Naive thymus-derived CD4-positive, alpha-beta T cell (primary cell): ENCODE measurements at regions of chr5 and their contacts with region 1.

Region 1: DNA sequence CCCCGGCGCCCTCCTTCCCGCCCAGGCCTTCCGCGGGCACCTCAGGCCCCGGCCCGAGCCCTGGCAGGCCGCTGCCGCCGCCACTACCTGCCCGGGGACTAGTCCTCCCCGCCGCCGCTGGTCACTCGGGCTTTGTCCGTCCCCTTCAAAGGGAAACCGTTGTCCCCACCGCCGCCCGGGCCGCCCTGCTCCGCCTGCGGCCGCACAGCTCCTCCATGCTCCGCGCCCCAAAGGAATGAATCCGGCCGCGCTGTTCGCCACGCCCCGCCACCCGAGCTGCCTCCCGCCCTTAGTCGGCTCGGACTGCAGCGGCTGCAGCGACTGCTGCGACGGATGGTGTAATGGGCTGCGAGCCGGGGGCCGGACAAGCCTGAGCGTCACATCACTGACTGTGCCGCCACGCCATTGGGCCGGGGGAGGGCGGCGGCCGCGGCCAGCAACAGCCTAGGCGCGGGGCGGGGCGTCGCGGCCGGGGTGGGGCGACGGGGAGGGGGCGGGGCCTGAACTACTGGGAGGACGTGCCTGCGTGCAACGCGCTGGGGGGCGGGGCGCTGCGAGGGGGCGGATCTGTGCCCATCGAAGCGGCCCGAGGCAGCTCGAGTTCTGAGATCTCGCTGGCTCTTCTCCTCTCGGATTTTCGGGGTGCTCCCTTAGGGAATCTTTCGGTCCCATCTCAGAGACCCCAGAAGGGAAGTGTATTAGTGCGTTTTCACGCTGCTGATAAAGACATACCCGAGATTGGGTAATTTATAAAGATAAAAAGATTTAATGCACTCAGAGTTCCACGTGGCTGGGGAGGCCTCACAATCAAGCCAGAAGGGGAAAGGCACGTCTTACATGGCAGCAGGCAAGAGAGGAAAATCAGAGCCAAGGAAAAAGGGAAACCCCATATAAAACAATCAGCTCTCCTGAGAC is at the start of gene FEM1C:
- DNase-seq: peak; percentile 85 to 97 (median 93)
- ATAC-seq: peak; percentile 93
- H3K4me3 ChIP-seq: peak within 1 kb of the TSS; percentile 70
- H3K4me3 Mint-ChIP-seq: peak within 1 kb of the TSS; percentile 94 to 100 (median 96)
- H3K27ac ChIP-seq: peak within 1 kb of the TSS; percentile 96
- H3K27ac Mint-ChIP-seq: peak within 1 kb of the TSS; percentile 92 to 100 (median 96)
- H3K4me1 ChIP-seq: peaks cover 31 to 38% of the 10 kb centered on the region in 2 donors
- H3K4me1 Mint-ChIP-seq: peaks cover 36 to 49% (median 43%) of the 10 kb centered on the region in 7 donors
- H3K27me3 ChIP-seq: no peaks in the 10 kb centered on the region
- H3K27me3 Mint-ChIP-seq: no peaks in the 10 kb centered on the region
- total RNA-seq, gene FEM1C: 14.9 to 33.1 (median 18.5) TPM

Region 2: DNA sequence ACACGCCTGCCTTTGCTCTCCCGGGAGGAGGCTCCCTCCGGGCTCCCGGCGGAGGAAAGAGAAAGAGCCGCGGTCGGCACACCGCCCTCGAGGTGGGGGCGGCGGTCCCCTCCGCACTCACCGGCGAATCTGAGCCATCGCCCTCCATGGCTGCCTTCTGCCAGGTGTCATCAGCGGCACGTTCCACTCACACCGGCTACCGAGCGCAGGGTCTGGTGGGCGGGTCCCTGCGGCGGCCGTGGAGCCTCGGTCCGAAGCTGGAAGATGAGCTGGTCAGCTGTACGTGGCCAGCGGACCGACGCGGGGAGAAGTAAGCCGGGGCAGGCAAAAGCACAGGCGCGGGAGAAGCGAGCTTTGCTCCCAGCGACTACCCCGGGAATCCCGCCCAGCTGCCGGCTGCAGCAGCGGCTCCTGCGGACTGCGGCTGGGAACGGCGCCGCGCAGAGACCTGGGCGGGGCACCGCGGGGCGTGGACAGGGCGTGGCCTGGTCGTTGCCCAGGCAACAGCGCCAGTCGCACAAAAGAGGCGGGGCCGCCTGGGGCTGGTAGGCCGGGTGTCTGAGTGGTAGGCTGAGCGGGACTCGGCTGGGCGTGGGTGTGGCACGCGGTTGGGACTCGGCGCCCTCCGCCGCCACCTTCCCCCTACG is 375.1 kb before region 1 on chr5 and contains the start of gene TRIM36:
- CTCF ChIA-PET with region 1: no interaction called
- POLR2A ChIA-PET with region 1: interaction called, 4 read pairs
- intact Hi-C with region 1: loop called (anchors 1 to 2 kb)
- DNase-seq: peak; percentile 70 to 97 (median 81)
- ATAC-seq: peak; percentile 98
- H3K4me3 ChIP-seq: peak within 1 kb of the TSS; percentile 70
- H3K4me3 Mint-ChIP-seq: peak within 1 kb of the TSS; percentile 71 to 89 (median 84)
- H3K27ac ChIP-seq: no peak within 1 kb of the TSS
- H3K27ac Mint-ChIP-seq: peak within 1 kb of the TSS in 2 of 9 donors; percentile 53 to 81
- H3K4me1 ChIP-seq: peaks cover 9 to 11% of the 10 kb centered on the region in 2 donors
- H3K4me1 Mint-ChIP-seq: peaks cover 6 to 17% (median 12%) of the 10 kb centered on the region in 7 donors
- H3K27me3 ChIP-seq: peaks cover 17 to 38% of the 10 kb centered on the region in 2 donors
- H3K27me3 Mint-ChIP-seq: peaks cover 61 to 77% (median 68%) of the 10 kb centered on the region in 5 donors
- total RNA-seq, gene TRIM36: 0.12 to 2.6 (median 0.32) TPM in 4 of 5 experiments, not detected in the other

Region 3: GRCh38 chr5:115262321-115263077 is 282.2 kb before region 1 on chr5 and contains the start of gene PGGT1B:
- CTCF ChIA-PET with region 1: no interaction called
- POLR2A ChIA-PET with region 1: interaction called, 5 read pairs
- intact Hi-C with region 1: loop called (anchors 1 kb)
- DNase-seq: peak; percentile 45 to 69 (median 64)
- ATAC-seq: peak; percentile 94
- H3K4me3 ChIP-seq: peak within 1 kb of the TSS; percentile 94
- H3K4me3 Mint-ChIP-seq: peak within 1 kb of the TSS; percentile 91 to 100 (median 96)
- H3K27ac ChIP-seq: peak within 1 kb of the TSS; percentile 76
- H3K27ac Mint-ChIP-seq: peak within 1 kb of the TSS; percentile 83 to 96 (median 94)
- H3K4me1 ChIP-seq: peaks cover 15 to 23% of the 10 kb centered on the region in 2 donors
- H3K4me1 Mint-ChIP-seq: peaks cover 33 to 59% (median 43%) of the 10 kb centered on the region in 7 donors
- H3K27me3 ChIP-seq: no peaks in the 10 kb centered on the region
- H3K27me3 Mint-ChIP-seq: peaks cover 0 to 4% (median 0%) of the 10 kb centered on the region in 5 donors
- total RNA-seq, gene PGGT1B: 34.5 to 49.1 (median 41.5) TPM

Region 4: GRCh38 chr5:115524199-115524847 is 20.4 kb before region 1 on chr5:
- CTCF ChIA-PET with region 1: no interaction called
- POLR2A ChIA-PET with region 1: interaction called, 7 read pairs
- intact Hi-C with region 1: loop called (anchors 2 kb)
- DNase-seq: no peak
- ATAC-seq: no peak
- H3K4me3 ChIP-seq: no peak overlapping the region
- H3K4me3 Mint-ChIP-seq: no peak overlapping the region
- H3K27ac ChIP-seq: no peak overlapping the region
- H3K27ac Mint-ChIP-seq: peak overlapping the region in 3 of 9 donors; percentile 3 to 48 (median 16)
- H3K4me1 ChIP-seq: peaks cover 11 to 13% of the 10 kb centered on the region in 2 donors
- H3K4me1 Mint-ChIP-seq: peaks cover 32 to 65% (median 53%) of the 10 kb centered on the region in 7 donors
- H3K27me3 ChIP-seq: no peaks in the 10 kb centered on the region
- H3K27me3 Mint-ChIP-seq: no peaks in the 10 kb centered on the region

Region 5: DNA sequence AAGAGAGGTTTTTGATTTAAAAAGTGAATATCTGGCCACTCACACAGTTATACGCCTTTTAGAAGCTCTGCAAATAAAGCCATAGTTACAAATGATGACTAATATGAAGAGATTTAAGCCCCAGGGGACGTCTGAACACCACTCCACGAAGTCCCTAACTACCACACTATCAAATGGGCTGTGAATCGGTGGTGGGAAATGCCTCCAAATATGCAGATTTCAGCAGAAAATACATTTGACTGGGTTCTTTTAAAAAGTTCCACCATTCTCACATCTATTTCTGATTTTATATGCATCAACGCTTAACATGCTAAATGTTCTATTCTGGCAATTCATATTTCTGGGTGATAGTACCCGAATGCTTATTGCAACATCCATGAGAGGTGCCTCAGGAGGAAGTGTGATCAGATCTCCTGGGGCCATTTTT is 35.1 kb after region 1 on chr5:
- CTCF ChIA-PET with region 1: no interaction called
- POLR2A ChIA-PET with region 1: no interaction called
- intact Hi-C with region 1: loop called in 1 of 2 experiments (anchors 1 kb)
- DNase-seq: no peak
- ATAC-seq: no peak
- H3K4me3 ChIP-seq: no peak overlapping the region
- H3K4me3 Mint-ChIP-seq: no peak overlapping the region
- H3K27ac ChIP-seq: no peak overlapping the region
- H3K27ac Mint-ChIP-seq: no peak overlapping the region
- H3K4me1 ChIP-seq: no peaks in the 10 kb centered on the region
- H3K4me1 Mint-ChIP-seq: no peaks in the 10 kb centered on the region
- H3K27me3 ChIP-seq: no peaks in the 10 kb centered on the region
- H3K27me3 Mint-ChIP-seq: peaks cover 0 to 4% (median 0%) of the 10 kb centered on the region in 5 donors

Region 6: DNA sequence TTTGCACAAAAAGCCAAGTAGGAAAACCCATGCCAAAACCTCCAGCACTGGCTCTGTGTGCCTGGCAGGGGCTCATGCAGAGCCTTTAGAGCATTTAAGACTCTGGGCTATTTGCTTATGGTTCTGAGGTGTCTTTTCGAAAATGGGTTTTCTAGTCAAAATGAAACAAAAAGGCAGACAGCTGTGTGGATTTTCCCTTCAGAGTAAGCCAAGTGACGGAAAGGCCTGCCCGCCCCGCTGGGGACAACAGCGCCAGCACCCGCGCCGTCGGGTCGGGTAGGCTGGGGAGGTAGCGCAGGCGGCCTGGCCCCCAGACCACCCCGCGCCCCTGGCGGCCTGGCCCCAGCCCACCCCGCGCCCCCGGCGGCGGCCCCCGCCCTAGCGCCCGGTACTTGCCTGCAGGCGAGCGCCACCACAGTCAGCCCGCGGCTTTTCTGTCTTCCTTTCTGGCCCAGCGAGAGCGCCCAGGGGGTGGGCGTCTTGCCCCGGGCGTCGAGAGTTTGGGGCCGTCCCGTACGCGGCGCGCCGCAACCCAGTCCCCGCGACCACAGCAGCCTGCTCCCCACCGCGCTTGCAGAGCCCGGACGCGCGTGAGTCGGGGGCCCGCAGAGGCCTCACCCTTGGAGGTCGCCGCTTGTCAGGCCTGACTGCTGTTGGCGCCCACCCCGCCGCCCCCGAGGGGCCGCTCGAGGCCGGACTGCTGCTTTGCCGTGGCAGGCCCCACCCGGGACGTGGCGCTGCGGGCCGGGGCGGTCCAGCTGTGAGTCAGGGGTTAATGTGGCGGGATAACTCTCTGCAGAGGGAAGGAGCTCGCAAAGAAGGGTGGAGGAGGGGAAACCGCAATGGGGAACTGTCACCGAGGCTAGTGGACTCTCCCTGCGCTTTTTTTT is 57.3 kb after region 1 on chr5 and contains the start of gene TICAM2:
- CTCF ChIA-PET with region 1: no interaction called
- POLR2A ChIA-PET with region 1: interaction called, 8 read pairs
- intact Hi-C with region 1: loop called (anchors 1 kb)
- DNase-seq: peak; percentile 39 to 74 (median 56)
- ATAC-seq: peak; percentile 84
- H3K4me3 ChIP-seq: peak within 1 kb of the TSS; percentile 63
- H3K4me3 Mint-ChIP-seq: peak within 1 kb of the TSS; percentile 71 to 89 (median 84)
- H3K27ac ChIP-seq: peak within 1 kb of the TSS; percentile 72
- H3K27ac Mint-ChIP-seq: peak within 1 kb of the TSS; percentile 69 to 94 (median 84)
- H3K4me1 ChIP-seq: no peaks in the 10 kb centered on the region
- H3K4me1 Mint-ChIP-seq: peaks cover 19 to 41% (median 32%) of the 10 kb centered on the region in 7 donors
- H3K27me3 ChIP-seq: no peaks in the 10 kb centered on the region
- H3K27me3 Mint-ChIP-seq: no peaks in the 10 kb centered on the region
- total RNA-seq, gene TICAM2: 0.93 to 3.7 (median 1.9) TPM

Region 7: DNA sequence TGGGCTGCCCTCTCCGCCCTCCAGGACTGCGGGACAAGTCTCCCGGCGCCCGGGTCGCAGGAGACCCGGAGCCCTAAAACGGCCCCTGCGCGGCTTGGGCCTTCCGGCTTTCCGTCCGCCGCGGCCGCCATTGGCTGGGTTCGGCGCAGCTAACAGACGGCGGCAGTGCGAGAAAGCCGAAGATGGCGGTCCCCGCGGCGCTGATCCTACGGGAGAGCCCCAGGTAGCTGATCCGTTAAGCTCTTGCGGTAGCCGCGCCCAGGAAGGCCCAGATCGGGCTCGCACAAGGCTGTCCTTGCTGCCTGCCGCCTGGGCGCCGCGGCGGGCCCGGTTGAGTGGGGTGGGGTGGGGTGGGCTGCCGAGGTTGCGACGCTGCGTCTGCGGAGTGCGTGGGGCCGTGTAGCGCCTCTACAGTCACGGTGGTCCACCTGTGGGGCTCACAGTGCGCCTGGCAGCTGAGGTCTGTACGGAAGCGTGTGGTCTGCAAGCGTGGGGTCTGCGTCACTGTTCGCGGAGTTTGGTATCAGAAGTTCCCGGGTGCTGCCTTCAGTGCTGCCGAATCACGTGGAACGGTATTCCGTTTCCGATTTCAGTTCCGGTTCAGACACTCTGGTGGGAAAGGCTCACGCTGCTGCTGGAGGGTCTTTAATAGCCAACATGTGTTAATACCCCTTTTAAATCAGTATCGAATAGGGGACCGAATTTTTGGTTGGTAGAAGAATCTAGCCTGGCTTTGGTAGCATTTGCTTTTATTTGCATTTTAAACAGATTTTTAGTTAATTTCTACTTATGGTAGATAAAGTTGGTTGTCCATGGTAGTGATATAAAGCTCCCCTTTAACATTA is 540.4 kb after region 1 on chr5 and contains the start of gene COMMD10:
- CTCF ChIA-PET with region 1: no interaction called
- POLR2A ChIA-PET with region 1: interaction called, 3 read pairs
- intact Hi-C with region 1: loop called (anchors 1 kb)
- DNase-seq: peak; percentile 65 to 88 (median 83)
- ATAC-seq: peak; percentile 95
- H3K4me3 ChIP-seq: peak within 1 kb of the TSS; percentile 54
- H3K4me3 Mint-ChIP-seq: peak within 1 kb of the TSS; percentile 87 to 98 (median 95)
- H3K27ac ChIP-seq: peak within 1 kb of the TSS; percentile 94
- H3K27ac Mint-ChIP-seq: peak within 1 kb of the TSS; percentile 90 to 99 (median 98)
- H3K4me1 ChIP-seq: peaks cover 13 to 16% of the 10 kb centered on the region in 2 donors
- H3K4me1 Mint-ChIP-seq: peaks cover 22 to 77% (median 66%) of the 10 kb centered on the region in 7 donors
- H3K27me3 ChIP-seq: no peaks in the 10 kb centered on the region
- H3K27me3 Mint-ChIP-seq: peaks cover 0 to 3% (median 0%) of the 10 kb centered on the region in 5 donors
- total RNA-seq, gene COMMD10: 29.4 to 50.6 (median 37.8) TPM

Region 8: DNA sequence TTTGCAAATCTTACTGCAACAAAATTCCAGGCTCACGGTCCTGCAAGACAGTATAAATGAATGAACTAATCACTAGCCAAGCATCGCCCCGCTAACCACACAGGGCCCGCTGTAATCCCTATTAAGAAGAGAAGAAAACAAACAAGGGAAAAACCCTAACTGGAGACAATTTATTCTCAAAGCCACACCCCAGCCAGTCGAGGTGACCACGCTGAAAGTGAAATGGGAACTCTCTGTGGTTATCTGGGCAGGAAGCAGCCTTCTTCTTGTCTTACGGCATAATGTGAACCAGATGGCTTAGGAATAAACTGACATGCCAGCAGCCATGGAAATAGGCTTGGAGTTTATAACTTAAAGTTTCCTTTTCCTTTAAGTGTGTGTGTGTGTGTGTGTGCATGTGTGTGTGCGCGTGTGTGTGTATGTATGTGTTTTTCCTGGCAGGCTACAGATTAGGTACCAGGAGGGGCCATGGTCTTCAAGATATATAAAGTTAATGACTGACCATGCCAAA is 909.8 kb after region 1 on chr5:
- CTCF ChIA-PET with region 1: no interaction called
- POLR2A ChIA-PET with region 1: no interaction called
- intact Hi-C with region 1: no loop called
- DNase-seq: no peak
- ATAC-seq: peak; percentile 65
- H3K4me3 ChIP-seq: no peak overlapping the region
- H3K4me3 Mint-ChIP-seq: no peak overlapping the region
- H3K27ac ChIP-seq: no peak overlapping the region
- H3K27ac Mint-ChIP-seq: no peak overlapping the region
- H3K4me1 ChIP-seq: no peaks in the 10 kb centered on the region
- H3K4me1 Mint-ChIP-seq: peaks cover 0 to 12% (median 5%) of the 10 kb centered on the region in 7 donors
- H3K27me3 ChIP-seq: no peaks in the 10 kb centered on the region
- H3K27me3 Mint-ChIP-seq: no peaks in the 10 kb centered on the region